Posterior vena cava (tissue), 2 donors: ENCODE measurements at regions of chr19 and their contacts with region 1.

Region 1: GRCh38 chr19:13521066-13521465 is 14.8 kb upstream of the CACNA1A start:
- DNase-seq: no peak

Region 2: GRCh38 chr19:13484166-13484565 is 36.9 kb before region 1 on chr19:
- intact Hi-C with region 1: loop called in 1 of 2 experiments (anchors 1 kb)
- DNase-seq: no peak